T-cell (primary cell): ENCODE measurements at regions of chr11 and their contacts with region 1.

Region 1: DNA sequence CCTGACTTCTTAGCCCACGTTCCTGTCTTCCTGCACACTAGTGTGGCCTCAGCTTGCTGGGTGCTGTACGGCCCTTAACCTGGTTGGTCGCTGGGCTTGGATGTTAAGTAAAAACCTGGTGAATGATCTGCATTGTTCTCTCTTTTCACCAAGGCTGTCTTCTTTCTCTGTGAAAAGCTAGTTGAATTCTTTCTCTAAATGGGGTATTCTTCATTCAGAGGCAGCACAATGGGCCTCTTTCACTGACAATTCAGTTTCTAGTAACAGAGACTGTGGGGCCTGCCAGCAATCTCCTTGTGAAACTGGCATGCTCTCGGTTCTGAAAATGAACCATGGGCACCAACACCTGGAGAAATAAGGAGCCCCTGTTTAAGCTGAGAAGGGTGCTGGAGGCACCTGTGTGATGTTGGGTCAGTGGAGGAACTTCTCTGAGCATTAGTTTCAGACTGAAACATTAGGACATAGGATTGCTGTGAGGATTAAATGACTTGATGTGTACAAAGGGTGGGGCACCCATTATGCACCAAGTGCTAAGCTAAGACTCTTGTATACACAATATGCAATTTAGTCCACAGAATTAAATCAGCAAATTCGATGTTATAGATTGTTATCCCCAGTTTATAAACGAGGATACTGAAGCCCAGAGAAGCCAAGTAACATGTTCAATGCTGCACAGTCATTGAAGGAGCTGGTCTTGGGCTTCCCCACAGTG is 33.1 kb upstream of the ELF5 start:
- DNase-seq: no peak
- ATAC-seq: no peak
- H3K4me3 ChIP-seq: no peak overlapping the region
- H3K4me3 Mint-ChIP-seq: no peak overlapping the region
- H3K27ac ChIP-seq: no peak overlapping the region
- H3K27ac Mint-ChIP-seq: no peak overlapping the region
- H3K4me1 ChIP-seq: no peaks in the 10 kb centered on the region
- H3K4me1 Mint-ChIP-seq: no peaks in the 10 kb centered on the region
- H3K27me3 ChIP-seq: peaks cover 0 to 18% of the 10 kb centered on the region in 2 experiments
- H3K27me3 Mint-ChIP-seq: peaks cover 27 to 34% of the 10 kb centered on the region in 2 donors

Region 2: DNA sequence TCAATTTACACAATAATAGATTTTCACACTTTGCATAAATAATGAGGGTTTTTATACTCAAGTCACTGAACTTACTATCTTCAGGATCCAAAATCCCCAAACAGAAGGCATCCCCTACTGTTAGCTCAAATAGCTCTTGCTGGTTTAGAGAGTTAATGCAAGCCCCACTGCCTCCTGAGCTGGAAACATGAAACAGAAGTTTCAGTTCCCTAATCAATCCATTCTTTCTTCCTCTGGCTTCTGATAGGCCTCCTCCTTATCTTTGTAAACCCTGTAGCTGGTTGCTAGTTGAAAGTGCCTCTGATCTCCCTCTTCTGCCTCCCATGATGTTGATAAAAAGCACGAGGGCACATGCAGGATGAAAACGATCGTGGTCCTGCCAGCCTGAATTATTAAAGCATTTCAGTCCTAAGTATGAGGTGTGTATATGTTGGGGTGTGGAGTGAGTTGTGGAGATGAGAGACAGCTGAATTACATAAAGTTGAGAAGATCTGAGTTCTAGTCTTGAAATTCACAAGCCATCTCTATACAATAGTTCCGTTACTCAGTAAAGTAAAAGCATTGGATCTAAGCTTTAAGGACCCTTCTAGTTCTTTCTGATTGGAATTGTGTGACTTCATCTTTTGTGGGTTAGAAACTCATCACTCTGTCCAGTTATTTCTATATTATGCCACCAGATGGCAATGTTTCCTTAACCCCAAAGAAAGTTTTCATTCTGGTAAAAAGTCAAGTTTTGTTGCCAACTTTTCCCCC is 39.2 kb after region 1 on chr11:
- CTCF ChIA-PET with region 1: no interaction called
- POLR2A ChIA-PET with region 1: no interaction called
- DNase-seq: peak in 1 of 35 experiments; percentile 59
- ATAC-seq: peak in 1 of 4 experiments; percentile 12
- H3K4me3 ChIP-seq: no peak overlapping the region
- H3K4me3 Mint-ChIP-seq: no peak overlapping the region
- H3K27ac ChIP-seq: no peak overlapping the region
- H3K27ac Mint-ChIP-seq: no peak overlapping the region
- H3K4me1 ChIP-seq: no peaks in the 10 kb centered on the region
- H3K4me1 Mint-ChIP-seq: peaks cover 0 to 8% (median 4%) of the 10 kb centered on the region in 3 donors
- H3K27me3 ChIP-seq: peaks cover 3 to 7% of the 10 kb centered on the region in 2 experiments
- H3K27me3 Mint-ChIP-seq: peaks cover 21 to 27% of the 10 kb centered on the region in 2 donors

Region 3: GRCh38 chr11:34614344-34615104 is 67.9 kb after region 1 on chr11:
- CTCF ChIA-PET with region 1: no interaction called
- POLR2A ChIA-PET with region 1: no interaction called
- DNase-seq: no peak
- ATAC-seq: no peak
- H3K4me3 ChIP-seq: no peak overlapping the region
- H3K4me3 Mint-ChIP-seq: no peak overlapping the region
- H3K27ac ChIP-seq: no peak overlapping the region
- H3K27ac Mint-ChIP-seq: no peak overlapping the region
- H3K4me1 ChIP-seq: no peaks in the 10 kb centered on the region
- H3K4me1 Mint-ChIP-seq: peaks cover 0 to 3% (median 1%) of the 10 kb centered on the region in 3 donors
- H3K27me3 ChIP-seq: no peaks in the 10 kb centered on the region
- H3K27me3 Mint-ChIP-seq: peaks cover 0 to 11% of the 10 kb centered on the region in 2 donors

Region 4: DNA sequence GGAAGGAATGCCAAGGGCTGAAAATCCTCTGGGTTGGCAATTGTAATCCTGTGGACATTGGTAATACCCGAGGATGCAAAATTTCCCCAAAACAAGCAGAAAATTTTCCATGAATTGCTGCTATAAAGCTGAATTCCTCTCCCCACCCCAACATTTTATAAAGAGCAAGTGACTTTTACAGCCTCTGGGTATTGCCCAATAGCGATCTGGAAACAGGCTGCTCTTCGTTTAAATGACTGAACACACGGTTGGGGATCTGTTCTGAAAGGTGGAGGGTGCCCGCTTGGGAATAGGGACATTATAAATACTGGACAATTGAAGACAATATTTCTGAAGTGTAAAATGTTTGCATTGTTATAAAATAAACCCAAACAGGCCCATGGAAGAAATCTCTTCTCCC is 94.8 kb after region 1 on chr11:
- CTCF ChIA-PET with region 1: interaction called in 1 of 2 experiments, 11 read pairs
- POLR2A ChIA-PET with region 1: no interaction called
- DNase-seq: no peak
- ATAC-seq: no peak
- H3K4me3 ChIP-seq: no peak overlapping the region
- H3K4me3 Mint-ChIP-seq: no peak overlapping the region
- H3K27ac ChIP-seq: no peak overlapping the region
- H3K27ac Mint-ChIP-seq: no peak overlapping the region
- H3K4me1 ChIP-seq: no peaks in the 10 kb centered on the region
- H3K4me1 Mint-ChIP-seq: no peaks in the 10 kb centered on the region
- H3K27me3 ChIP-seq: peaks cover 0 to 20% of the 10 kb centered on the region in 2 experiments
- H3K27me3 Mint-ChIP-seq: peaks cover 14 to 18% of the 10 kb centered on the region in 2 donors